Vagina (tissue), 2 donors: ENCODE measurements at regions of chr15 and their contacts with region 1.

Region 1: GRCh38 chr15:74127260-74127953 is 3.0 kb upstream of the ISLR2 start:
- DNase-seq: peak in 1 of 2 donors; percentile 85
- H3K4me3 ChIP-seq: peak overlapping the region; percentile 34 to 39
- H3K27ac ChIP-seq: no peak overlapping the region
- H3K4me1 ChIP-seq: peaks cover 31% of the 10 kb centered on the region
- H3K27me3 ChIP-seq: peaks cover 19% of the 10 kb centered on the region
- CTCF ChIP-seq: peak; percentile 82 to 100 (median 96)
- POLR2A ChIP-seq: no peak

Region 2: DNA sequence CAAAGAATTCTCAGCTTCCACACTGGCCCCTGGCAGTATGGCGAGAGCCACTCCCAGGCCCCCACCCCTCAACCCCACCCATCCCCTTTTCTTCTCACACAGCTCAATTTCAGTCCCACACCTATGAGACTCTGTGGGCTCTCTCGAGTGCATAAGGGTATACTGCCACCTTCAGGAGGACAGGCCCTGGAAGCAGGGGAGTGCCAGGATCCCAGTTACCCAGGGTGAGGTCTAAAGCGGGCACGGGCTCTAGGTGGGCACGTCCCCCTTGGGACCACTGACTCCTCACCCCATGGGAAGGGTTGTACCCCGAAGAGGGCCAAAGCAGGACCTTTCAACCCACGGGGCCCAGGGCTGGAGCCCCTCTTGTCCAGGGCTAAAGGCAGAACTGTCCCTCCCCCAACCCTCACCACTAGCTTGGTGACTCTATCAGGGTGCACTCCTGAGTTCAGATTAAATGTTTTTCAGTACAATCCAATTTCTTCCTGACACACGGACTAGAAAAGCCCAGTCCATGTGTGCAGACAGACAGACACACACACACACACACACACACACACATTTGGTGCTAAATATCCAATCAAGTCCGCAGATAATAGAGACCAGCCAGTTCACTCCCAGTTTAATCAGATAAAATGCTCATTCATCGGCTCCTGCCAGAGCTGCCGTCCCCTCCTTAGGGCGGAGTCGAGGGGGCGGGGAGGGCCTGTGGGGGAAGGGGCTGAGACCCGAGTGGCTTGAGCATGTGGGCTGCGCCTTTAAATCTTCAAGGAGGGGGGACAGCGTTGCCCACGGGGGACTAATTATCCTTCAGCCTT is 180.6 kb after region 1 on chr15:
- intact Hi-C with region 1: loop called (anchors 5 kb)
- DNase-seq: no peak
- H3K4me3 ChIP-seq: no peak overlapping the region
- H3K27ac ChIP-seq: no peak overlapping the region
- H3K4me1 ChIP-seq: no peaks in the 10 kb centered on the region
- H3K27me3 ChIP-seq: no peaks in the 10 kb centered on the region
- CTCF ChIP-seq: peak in 2 of 3 experiments; percentile 25 to 48
- POLR2A ChIP-seq: no peak